Common myeloid progenitor, CD34-positive (primary cell): ENCODE measurements at regions of chr14 and their contacts with region 1.

Region 1: DNA sequence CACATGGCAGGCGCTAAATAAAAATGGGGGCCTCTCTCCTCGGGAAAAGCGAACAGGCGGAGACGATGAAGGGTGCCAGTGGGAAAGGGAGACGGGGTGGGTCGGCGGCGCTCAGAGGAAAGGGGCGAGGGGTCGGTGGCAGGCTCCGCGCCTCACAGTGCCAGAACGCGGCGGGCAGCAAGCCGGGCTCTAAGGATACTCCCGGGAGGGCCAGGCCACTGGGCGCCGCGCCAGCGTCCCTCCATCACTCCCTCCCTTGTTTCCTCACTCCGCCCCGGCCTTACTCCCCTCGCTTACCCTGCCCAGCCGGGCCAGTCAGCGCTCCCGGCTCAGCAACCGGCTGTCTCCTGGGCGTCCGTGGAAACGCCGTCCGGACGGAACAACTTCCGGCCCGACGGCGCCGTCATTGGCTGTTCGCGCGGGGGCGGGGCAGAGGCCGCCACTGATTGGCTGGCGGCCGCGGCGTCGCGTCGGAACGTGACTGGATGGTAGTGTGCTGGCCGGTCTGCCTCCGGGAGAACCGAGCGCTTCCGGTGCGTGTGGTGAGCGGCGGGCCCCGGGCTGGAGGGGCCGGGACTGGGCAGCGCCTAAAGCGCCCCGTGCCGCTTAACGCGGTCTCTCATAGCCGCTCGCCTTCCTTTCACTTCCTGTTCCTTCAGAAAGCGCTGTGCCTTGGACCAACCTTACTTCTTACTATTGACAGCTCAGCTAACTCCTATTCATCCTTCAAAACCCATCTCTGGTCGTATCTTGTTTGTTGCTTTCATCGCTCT is 53.0 kb downstream of the SLC25A47 start:
- DNase-seq: peak; percentile 91 to 94 (median 92)
- H3K4me3 ChIP-seq: peak within 1 kb of the TSS; percentile 67 to 95 (median 82)
- H3K27ac ChIP-seq: peak within 1 kb of the TSS; percentile 79 to 90
- H3K4me1 ChIP-seq: peaks cover 14 to 43% (median 30%) of the 10 kb centered on the region in 4 experiments
- H3K27me3 ChIP-seq: no peaks in the 10 kb centered on the region

Region 2: GRCh38 chr14:100306420-100307219 is 69.5 kb before region 1 on chr14 and contains the start of gene SLC25A29:
- CTCF ChIA-PET with region 1: interaction called, 13 read pairs
- POLR2A ChIA-PET with region 1: no interaction called
- DNase-seq: peak; percentile 77 to 90 (median 86)
- H3K4me3 ChIP-seq: peak within 1 kb of the TSS; percentile 76 to 91 (median 83)
- H3K27ac ChIP-seq: peak within 1 kb of the TSS; percentile 15 to 74
- H3K4me1 ChIP-seq: peaks cover 0 to 65% (median 59%) of the 10 kb centered on the region in 4 experiments
- H3K27me3 ChIP-seq: no peaks in the 10 kb centered on the region

Region 3: GRCh38 chr14:100362311-100362927 is 13.7 kb before region 1 on chr14:
- CTCF ChIA-PET with region 1: interaction called, 12 read pairs
- POLR2A ChIA-PET with region 1: no interaction called
- DNase-seq: no peak
- H3K4me3 ChIP-seq: no peak overlapping the region
- H3K27ac ChIP-seq: no peak overlapping the region
- H3K4me1 ChIP-seq: no peaks in the 10 kb centered on the region
- H3K27me3 ChIP-seq: no peaks in the 10 kb centered on the region

Region 4: DNA sequence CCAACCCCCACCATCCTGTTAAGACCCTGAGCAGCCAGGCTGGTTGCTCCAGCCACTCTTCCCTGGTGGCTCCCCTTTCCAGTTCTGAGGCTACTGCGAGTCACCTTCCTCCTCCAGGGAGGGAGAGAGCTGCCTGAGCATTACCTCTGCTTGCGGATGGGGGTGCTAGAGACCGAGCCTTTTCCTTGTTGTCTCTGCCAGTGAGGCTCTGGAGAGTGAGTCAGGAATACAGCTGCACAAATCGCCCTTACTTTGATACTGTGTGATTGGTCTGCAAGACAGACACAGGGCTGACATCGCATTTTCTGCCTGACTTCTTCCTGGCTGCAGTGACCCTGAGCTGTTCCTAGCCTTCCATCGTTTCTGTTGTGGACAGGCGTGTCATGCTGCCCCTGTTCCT is 41.3 kb after region 1 on chr14:
- CTCF ChIA-PET with region 1: no interaction called
- POLR2A ChIA-PET with region 1: no interaction called
- DNase-seq: peak in 1 of 3 donors; percentile 7
- H3K4me3 ChIP-seq: no peak overlapping the region
- H3K27ac ChIP-seq: no peak overlapping the region
- H3K4me1 ChIP-seq: no peaks in the 10 kb centered on the region
- H3K27me3 ChIP-seq: no peaks in the 10 kb centered on the region